GM13976 (cell line): ENCODE measurements at regions of chr9 and their contacts with region 1.

Region 1: DNA sequence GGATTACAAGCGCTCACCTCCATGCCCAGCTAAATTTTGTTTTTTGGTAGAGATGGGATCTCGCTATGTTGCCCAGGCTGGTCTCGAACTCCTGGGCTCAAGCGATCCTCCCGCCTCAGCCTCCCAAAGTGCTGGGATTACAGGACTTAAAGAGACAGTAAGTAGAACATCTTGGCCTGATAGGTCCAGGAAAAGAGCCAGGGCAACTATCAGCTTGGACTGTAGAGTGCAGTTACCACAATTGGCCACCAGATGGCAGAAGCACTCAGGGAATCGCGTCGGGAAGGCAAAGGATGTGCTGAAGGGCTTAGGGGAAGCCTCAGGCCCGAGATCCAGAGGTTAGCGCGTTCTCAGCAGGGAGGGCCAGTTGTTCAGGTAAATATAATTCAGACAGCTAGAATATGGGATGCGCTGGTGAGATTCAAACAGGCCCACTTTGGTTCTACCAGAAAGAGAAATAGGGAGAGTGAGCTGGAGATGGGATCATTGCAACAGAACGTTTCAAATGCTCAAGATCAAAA is 21.5 kb downstream of the C9orf57 start:
- DNase-seq: peak; percentile 75
- CTCF ChIP-seq: peak; percentile 98

Region 2: GRCh38 chr9:71806901-71807307 is 232.0 kb before region 1 on chr9:
- in situ Hi-C with region 1: loop called (anchors 10 kb)
- DNase-seq: peak; percentile 53
- CTCF ChIP-seq: peak; percentile 84

Region 3: GRCh38 chr9:72082536-72082935 is 43.6 kb after region 1 on chr9:
- in situ Hi-C with region 1: no loop called
- DNase-seq: no peak
- CTCF ChIP-seq: no peak

Region 4: GRCh38 chr9:72280913-72281500 is 242.1 kb after region 1 on chr9:
- in situ Hi-C with region 1: loop called (anchors 5 kb)
- DNase-seq: peak; percentile 73
- CTCF ChIP-seq: peak; percentile 90

Region 5: DNA sequence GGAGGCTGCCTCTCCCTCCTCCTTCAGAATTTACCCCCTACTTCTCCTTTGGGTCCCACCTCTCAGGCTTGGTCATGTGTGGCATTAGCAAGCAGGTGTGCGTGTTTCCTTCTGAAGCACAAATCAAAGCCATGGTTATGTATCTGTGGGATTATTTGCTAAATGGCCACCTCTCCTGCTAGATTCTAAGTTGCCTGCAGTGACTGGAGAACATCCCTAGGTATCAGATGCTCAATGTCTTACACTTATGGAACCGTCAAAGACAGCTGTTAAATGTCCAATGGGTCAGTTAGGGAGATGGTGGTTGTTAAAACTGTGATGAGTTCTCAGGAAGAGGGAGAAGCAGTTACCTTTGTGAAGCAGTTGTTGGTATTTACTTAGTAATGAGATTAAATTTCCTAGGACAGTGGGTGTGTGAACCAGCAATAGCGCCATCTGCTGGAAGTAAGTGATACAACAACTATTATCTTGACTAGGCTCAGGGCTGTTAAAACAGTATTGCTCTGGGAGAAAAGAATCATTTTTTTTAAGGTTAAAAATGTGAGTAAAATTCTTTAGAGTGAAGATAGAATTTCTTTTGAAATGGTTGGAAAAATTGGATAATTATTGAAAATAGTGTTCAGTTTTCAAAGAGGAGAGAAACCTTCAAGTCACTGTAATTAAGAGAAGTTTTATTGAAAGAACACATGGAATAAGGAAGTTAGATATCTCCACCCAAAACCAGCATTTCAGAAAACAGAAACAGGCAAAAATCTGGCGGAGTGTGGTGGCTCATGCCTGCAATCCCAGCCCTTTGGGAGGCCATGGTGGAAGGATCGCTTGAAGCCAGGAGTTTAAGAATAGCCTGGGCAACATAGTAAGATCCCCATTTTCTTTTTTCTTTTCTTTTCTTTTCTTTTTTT is 553.8 kb after region 1 on chr9:
- in situ Hi-C with region 1: loop called (anchors 25 kb)
- DNase-seq: peak; percentile 50
- CTCF ChIP-seq: peak; percentile 64

Region 6: DNA sequence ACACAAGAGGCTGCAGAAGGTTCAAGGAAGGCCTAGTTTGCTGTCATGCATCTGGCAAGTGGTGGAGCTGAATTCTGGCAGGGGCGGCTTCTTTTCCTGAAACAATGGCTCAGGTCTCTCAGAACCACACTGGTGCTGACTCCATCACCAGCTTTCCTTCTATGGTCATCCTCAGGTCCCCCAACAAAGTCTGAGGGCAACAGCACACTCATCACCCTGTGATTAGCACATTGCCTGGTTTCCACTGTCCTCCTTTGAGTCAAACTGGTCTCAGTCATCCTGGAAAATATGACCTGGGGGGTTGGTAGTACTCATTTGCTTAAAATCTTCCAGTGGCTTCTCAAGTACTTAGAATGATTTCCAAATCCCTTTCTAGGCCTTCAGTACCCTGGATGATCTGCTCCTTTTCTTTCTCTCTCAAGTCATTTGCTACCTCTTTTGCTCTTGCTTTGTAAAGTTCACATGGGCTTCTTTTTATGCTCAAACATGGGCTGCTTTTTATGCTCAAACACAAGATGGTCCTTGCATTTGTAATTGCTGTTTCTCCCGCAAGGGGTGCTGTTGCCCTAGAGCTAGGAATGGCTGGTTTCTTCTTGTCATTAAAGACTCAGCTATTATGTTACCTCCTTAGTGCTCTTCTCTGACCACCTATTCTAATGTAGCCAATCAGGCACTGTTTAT is 769.0 kb after region 1 on chr9:
- in situ Hi-C with region 1: loop called (anchors 25 kb)
- DNase-seq: no peak
- CTCF ChIP-seq: no peak